ENCODE measurements at regions of chr19 and their contacts with region 1.

Region 1: GRCh38 chr19:17215125-17215971 is at the start of gene USE1:
- DNase-seq: peak; percentile 80 to 95 (median 85)
- ATAC-seq: peak; percentile 98
- H3K4me3 ChIP-seq: peak within 1 kb of the TSS; percentile 93
- H3K4me3 Mint-ChIP-seq: peak within 1 kb of the TSS; percentile 88
- H3K27ac ChIP-seq: peak within 1 kb of the TSS; percentile 74 to 97
- H3K27ac Mint-ChIP-seq: peak within 1 kb of the TSS; percentile 94
- H3K4me1 ChIP-seq: peaks cover 22% of the 10 kb centered on the region
- H3K4me1 Mint-ChIP-seq: peaks cover 11% of the 10 kb centered on the region
- H3K27me3 ChIP-seq: no peaks in the 10 kb centered on the region
- H3K27me3 Mint-ChIP-seq: no peaks in the 10 kb centered on the region
- CTCF ChIP-seq: no peak
- total RNA-seq, gene USE1: 23.1 to 24.3 TPM

Region 2: GRCh38 chr19:17125715-17126677 is 89.4 kb before region 1 on chr19:
- CTCF ChIA-PET with region 1: no interaction called
- POLR2A ChIA-PET with region 1: interaction called, 26 read pairs
- intact Hi-C with region 1: no loop called
- DNase-seq: peak; percentile 55 to 91 (median 74)
- ATAC-seq: peak; percentile 85
- H3K4me3 ChIP-seq: peak overlapping the region; percentile 39
- H3K4me3 Mint-ChIP-seq: peak overlapping the region; percentile 86
- H3K27ac ChIP-seq: peak overlapping the region; percentile 86 to 87
- H3K27ac Mint-ChIP-seq: peak overlapping the region; percentile 97
- H3K4me1 ChIP-seq: peaks cover 54% of the 10 kb centered on the region
- H3K4me1 Mint-ChIP-seq: peaks cover 51% of the 10 kb centered on the region
- H3K27me3 ChIP-seq: no peaks in the 10 kb centered on the region
- H3K27me3 Mint-ChIP-seq: no peaks in the 10 kb centered on the region
- CTCF ChIP-seq: no peak

Region 3: DNA sequence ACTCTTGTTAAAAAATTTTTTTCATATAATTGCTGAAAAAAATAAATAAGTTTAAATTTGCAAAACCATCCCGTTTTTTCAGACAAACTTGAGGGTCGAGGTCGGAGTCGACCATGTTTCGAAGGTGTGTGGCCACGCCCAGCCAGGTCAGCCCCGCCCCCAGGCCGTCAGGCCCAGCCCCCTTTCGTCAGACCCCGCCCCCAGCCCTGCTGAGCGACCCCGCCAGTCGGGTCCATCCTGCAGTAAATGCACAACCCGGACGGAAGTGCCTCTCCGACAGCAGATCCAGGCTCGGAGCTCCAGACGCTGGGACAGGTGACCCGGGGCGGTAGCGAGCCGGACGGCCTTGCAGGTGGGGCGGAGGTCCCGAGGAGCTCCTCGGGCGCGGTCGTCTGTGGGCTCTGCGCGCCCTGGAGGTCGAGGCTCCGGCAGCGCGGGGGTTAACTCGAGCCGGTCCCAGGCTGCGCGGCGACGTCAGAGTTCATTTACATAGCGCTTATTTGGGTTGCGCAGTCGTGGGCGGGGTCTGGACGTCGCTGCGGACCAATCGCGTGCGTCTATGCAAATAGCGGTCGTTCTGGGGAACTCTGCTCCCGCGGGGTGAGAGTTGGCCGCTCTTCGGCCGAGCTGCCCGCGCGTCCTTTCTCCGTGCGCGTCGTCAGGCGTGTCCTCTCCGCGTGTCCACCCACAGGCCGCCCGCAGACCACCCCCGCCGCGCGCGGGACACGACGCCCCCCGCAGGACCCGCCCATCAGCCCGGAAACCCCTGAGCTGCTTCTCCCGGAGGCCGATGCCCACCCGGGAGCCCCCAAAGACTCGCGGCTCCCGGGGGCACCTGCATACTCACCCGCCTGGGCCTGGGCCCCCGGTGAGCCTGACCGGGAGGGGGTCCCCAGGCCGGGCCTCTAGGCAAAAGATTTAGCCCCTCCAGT is 10.9 kb after region 1 on chr19 and contains the start of gene OCEL1:
- CTCF ChIA-PET with region 1: no interaction called
- POLR2A ChIA-PET with region 1: interaction called, 97 read pairs
- intact Hi-C with region 1: loop called (anchors 1 kb)
- DNase-seq: peak; percentile 90 to 99 (median 96)
- ATAC-seq: peak; percentile 88
- H3K4me3 ChIP-seq: peak within 1 kb of the TSS; percentile 61
- H3K4me3 Mint-ChIP-seq: peak within 1 kb of the TSS; percentile 95
- H3K27ac ChIP-seq: peak within 1 kb of the TSS; percentile 70 to 84
- H3K27ac Mint-ChIP-seq: peak within 1 kb of the TSS; percentile 90
- H3K4me1 ChIP-seq: peaks cover 24% of the 10 kb centered on the region
- H3K4me1 Mint-ChIP-seq: peaks cover 4% of the 10 kb centered on the region
- H3K27me3 ChIP-seq: no peaks in the 10 kb centered on the region
- H3K27me3 Mint-ChIP-seq: no peaks in the 10 kb centered on the region
- CTCF ChIP-seq: no peak
- total RNA-seq, gene OCEL1: 20.5 to 22.2 TPM

Region 4: GRCh38 chr19:17266975-17267788 is 51.8 kb after region 1 on chr19 and contains the start of gene BABAM1:
- CTCF ChIA-PET with region 1: no interaction called
- POLR2A ChIA-PET with region 1: interaction called, 24 read pairs
- intact Hi-C with region 1: loop called in 1 of 2 experiments (anchors 1 kb)
- DNase-seq: peak; percentile 85 to 99 (median 92)
- ATAC-seq: peak; percentile 94
- H3K4me3 ChIP-seq: peak within 1 kb of the TSS; percentile 84
- H3K4me3 Mint-ChIP-seq: peak within 1 kb of the TSS; percentile 83
- H3K27ac ChIP-seq: peak within 1 kb of the TSS; percentile 47 to 63
- H3K27ac Mint-ChIP-seq: peak within 1 kb of the TSS; percentile 69
- H3K4me1 ChIP-seq: peaks cover 39% of the 10 kb centered on the region
- H3K4me1 Mint-ChIP-seq: peaks cover 15% of the 10 kb centered on the region
- H3K27me3 ChIP-seq: no peaks in the 10 kb centered on the region
- H3K27me3 Mint-ChIP-seq: no peaks in the 10 kb centered on the region
- CTCF ChIP-seq: no peak
- total RNA-seq, gene BABAM1: 56.2 to 63.5 TPM